ENCODE measurements at regions of chr19 and their contacts with region 1.

Region 1: DNA sequence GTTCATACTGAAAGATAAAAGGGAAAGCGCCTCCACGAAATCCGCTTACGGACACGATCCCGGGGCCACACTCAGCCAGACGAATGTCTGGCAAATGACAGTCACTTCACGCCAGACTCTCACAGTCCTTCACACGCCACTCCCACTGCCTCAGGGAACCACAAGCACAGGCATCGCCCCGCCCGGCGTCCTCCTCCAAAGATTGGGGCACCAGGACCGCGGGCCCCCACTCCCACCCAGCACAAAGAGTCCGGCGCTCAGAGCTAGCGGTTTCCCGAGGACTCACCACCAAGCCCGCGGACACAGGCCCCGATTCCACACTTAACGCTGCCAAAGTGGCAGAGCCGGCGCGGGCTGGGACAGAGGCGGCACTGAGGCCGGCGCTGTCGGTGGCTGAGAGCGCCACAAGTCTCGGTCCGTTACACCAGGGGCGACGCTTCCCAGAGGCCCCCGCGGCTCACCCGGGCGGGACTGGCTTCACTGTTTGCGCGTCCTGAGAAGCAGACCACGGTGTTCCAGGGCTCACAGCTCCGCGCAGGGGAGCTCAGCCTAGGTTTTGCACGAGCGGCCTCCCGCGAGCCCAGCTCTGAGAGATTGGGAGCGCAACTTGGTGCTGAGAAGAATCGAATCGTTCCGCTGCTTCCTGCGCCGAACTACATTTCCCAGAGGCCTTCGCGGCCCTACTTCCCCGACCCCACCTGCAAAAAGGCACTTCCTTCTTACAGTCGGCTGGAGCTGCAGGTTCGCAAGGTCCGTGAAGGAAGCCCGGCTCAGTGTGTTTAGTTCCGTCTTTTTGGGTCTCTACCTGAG is at the start of gene ZNF569:
- DNase-seq: peak; percentile 86 to 89
- ATAC-seq: peak; percentile 91 to 92
- H3K4me3 ChIP-seq: peak within 1 kb of the TSS; percentile 87 to 90 (median 88)
- H3K27ac ChIP-seq: peak within 1 kb of the TSS; percentile 84 to 92 (median 88)
- H3K4me1 ChIP-seq: peaks cover 14 to 16% of the 10 kb centered on the region in 2 donors
- H3K27me3 ChIP-seq: no peaks in the 10 kb centered on the region
- CTCF ChIP-seq: peak in 1 of 5 experiments; percentile 16
- POLR2A ChIP-seq: peak; percentile 20 to 28
- total RNA-seq, gene ZNF569: 3.4 to 9.2 (median 4.4) TPM

Region 2: GRCh38 chr19:36837906-36838783 is 628.9 kb before region 1 on chr19 and contains the start of gene ZNF790:
- in situ Hi-C with region 1: loop called in 1 of 4 experiments (anchors 10 kb)
- intact Hi-C with region 1: loop called (anchors 1 kb)
- DNase-seq: peak; percentile 74 to 85
- ATAC-seq: peak; percentile 98 to 99
- H3K4me3 ChIP-seq: peak within 1 kb of the TSS; percentile 68 to 87 (median 79)
- H3K27ac ChIP-seq: peak within 1 kb of the TSS; percentile 74 to 90 (median 86)
- H3K4me1 ChIP-seq: peaks cover 8 to 9% of the 10 kb centered on the region in 2 donors
- H3K27me3 ChIP-seq: no peaks in the 10 kb centered on the region
- CTCF ChIP-seq: no peak
- POLR2A ChIP-seq: no peak
- total RNA-seq, gene ZNF790: 2.4 to 8.1 (median 5.2) TPM

Region 3: DNA sequence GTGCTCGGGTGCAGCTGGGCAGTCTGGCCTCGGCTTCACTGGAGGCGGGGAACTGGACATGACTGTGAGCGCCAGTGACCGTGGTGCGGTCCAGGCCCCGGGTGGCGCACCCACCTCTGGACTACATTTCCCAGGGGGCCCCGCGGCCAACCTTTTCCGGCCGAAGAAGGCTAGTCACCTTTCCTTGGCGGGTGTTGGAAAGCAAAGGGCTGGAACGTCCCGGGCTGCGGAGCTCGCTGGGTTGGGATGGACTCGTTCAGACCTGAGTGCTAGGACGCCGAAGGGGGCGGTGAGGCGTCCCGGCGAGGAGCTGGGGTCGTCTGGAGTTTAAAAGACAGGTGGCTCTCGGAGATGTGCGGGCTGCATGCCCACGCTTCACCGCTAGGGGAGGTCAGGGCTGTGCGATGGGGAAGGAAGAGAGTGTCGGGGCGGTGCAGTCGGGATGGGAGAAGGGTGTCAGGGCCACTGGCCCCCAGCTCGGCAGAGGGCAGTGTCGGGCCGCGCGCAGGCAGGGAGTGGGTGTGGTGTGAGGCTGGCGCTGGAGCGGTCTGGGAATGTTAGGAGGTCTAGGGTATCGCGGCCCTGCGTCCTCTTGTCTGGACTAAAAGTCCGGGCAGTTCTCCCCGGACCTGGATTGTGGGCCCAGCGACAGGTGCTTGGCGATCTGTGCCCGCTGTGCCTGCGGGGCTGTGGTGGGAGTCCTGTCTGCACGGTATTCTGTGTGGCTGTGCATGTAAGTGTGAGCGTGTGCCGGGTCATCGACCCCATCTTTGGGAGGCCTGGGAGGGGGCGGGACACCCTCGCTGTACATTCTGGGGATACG is 493.8 kb before region 1 on chr19:
- in situ Hi-C with region 1: no loop called
- intact Hi-C with region 1: loop called (anchors 5 kb)
- DNase-seq: peak; percentile 41 to 61
- ATAC-seq: peak; percentile 85 to 92
- H3K4me3 ChIP-seq: peak overlapping the region; percentile 61 to 82 (median 70)
- H3K27ac ChIP-seq: peak overlapping the region; percentile 52 to 82 (median 70)
- H3K4me1 ChIP-seq: peaks cover 3 to 7% of the 10 kb centered on the region in 2 donors
- H3K27me3 ChIP-seq: peaks cover 0 to 5% (median 0%) of the 10 kb centered on the region in 3 donors
- CTCF ChIP-seq: peak; percentile 64 to 85 (median 71)
- POLR2A ChIP-seq: no peak

Region 4: DNA sequence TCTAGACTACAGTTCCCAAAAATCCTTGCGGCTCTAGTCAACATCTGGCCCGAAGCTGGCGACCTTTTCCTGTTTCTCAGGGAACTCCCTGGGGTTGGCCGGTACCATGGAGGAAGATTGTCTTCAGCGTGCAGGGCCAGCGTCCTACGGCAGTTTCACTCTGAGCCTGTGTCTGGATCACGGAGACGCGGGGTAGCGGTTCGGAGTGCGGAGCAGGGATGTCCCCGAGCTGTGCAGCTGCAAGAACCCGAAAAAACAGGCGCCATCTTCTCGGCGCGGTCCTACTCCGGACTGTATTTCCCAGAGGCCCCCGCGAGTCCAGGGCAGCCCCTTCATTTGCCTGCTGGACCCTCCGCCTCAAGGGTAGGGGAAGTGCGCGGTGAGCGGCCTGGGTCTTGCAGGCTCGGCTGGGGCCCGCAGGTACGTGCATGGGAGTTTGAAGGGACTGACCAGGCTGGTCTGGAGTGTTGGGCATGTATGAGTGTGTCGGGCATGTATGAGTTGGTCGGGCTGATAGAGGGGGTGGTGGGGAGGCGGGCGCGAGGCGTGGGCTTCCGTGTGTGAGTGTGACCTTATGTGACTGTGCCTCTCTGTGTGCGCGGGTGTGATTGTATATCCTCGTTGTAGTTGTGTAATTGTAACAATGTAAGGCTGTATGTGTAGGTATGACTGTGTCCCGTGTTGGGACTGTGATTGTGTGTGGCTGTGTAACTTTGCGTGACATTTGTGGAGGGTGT is 249.0 kb before region 1 on chr19 and contains the start of gene ZNF383:
- in situ Hi-C with region 1: loop called in 1 of 4 experiments (anchors 25 kb)
- intact Hi-C with region 1: loop called (anchors 2 kb)
- DNase-seq: peak; percentile 81 to 83
- ATAC-seq: peak; percentile 95 to 96
- H3K4me3 ChIP-seq: peak within 1 kb of the TSS; percentile 82 to 92 (median 88)
- H3K27ac ChIP-seq: peak within 1 kb of the TSS; percentile 89 to 93 (median 91)
- H3K4me1 ChIP-seq: peaks cover 3 to 11% of the 10 kb centered on the region in 2 donors
- H3K27me3 ChIP-seq: no peaks in the 10 kb centered on the region
- CTCF ChIP-seq: no peak
- POLR2A ChIP-seq: peak; percentile 7 to 38
- total RNA-seq, gene ZNF383: 2.3 to 8.4 (median 4.0) TPM

Region 5: GRCh38 chr19:37370880-37371661 is 95.9 kb before region 1 on chr19 and contains the start of gene ZNF527:
- in situ Hi-C with region 1: loop called in 1 of 4 experiments (anchors 10 kb)
- intact Hi-C with region 1: loop called (anchors 1 kb)
- DNase-seq: peak; percentile 95 to 97
- ATAC-seq: peak; percentile 98 to 99
- H3K4me3 ChIP-seq: peak within 1 kb of the TSS; percentile 73 to 90 (median 88)
- H3K27ac ChIP-seq: peak within 1 kb of the TSS; percentile 84 to 91 (median 88)
- H3K4me1 ChIP-seq: peaks cover 7 to 8% of the 10 kb centered on the region in 2 donors
- H3K27me3 ChIP-seq: no peaks in the 10 kb centered on the region
- CTCF ChIP-seq: no peak
- POLR2A ChIP-seq: peak; percentile 76 to 88
- total RNA-seq, gene ZNF527: 2.0 to 6.0 (median 2.8) TPM

Region 6: DNA sequence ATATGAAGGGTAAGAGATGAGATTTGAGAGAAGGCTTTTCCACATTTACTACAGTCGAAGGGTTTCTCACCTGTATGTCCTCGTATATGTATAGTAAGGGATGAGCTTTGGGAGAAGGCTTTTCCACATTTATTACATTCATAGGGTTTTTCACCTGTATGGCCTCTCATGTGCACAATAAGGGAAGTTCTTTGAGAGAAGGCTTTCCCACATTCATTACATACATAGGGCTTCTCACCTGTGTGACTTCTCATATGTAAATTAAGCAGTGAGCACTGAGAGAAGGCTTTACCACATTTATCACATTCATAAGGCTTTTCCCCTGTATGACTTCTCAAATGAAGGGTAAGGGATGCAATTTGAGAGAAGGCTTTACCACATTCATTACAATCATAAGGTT is 54.3 kb before region 1 on chr19:
- in situ Hi-C with region 1: no loop called
- intact Hi-C with region 1: no loop called
- DNase-seq: no peak
- ATAC-seq: no peak
- H3K4me3 ChIP-seq: peak overlapping the region in 1 of 4 donors; percentile 40
- H3K27ac ChIP-seq: no peak overlapping the region
- H3K4me1 ChIP-seq: no peaks in the 10 kb centered on the region
- H3K27me3 ChIP-seq: no peaks in the 10 kb centered on the region
- CTCF ChIP-seq: no peak
- POLR2A ChIP-seq: no peak

Region 7: DNA sequence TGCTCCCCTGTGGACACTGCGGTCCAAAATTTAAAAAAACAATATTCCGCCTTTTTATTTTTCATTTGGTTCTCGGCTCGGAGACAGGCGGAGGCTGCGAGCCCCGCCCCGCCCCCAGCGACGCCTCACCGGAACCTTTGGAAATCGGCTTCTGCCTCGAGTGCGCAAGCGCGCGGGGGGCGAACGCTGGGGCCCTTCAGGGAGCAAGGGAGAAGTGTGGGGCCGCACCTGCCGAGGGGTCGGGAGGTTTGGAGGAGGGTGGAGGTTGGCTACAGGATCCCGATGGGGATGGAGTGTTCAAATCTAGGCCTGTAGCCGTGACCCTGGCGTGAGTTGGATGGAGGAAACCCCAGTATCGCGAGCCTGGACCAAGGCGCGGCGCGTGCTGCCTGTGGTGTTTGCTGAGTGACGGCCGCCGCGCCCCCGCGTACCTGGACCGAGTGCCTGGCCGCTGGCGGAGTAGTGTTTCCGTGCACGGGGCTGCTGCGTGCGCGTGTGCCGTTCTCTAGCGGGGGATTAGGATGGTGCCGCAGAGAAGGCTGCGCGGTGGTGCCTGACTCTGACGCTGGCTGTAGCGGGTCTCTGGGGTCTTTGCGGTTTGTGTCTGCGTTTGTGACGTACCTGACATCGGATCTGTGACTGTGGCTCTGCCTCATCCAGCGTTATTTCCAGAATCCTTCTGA is 188.8 kb after region 1 on chr19:
- in situ Hi-C with region 1: no loop called
- intact Hi-C with region 1: loop called (anchors 5 kb)
- DNase-seq: peak; percentile 63 to 81
- ATAC-seq: peak; percentile 85 to 93
- H3K4me3 ChIP-seq: peak overlapping the region; percentile 75 to 94 (median 84)
- H3K27ac ChIP-seq: peak overlapping the region; percentile 90 to 94 (median 93)
- H3K4me1 ChIP-seq: peaks cover 21 to 22% of the 10 kb centered on the region in 2 donors
- H3K27me3 ChIP-seq: no peaks in the 10 kb centered on the region
- CTCF ChIP-seq: peak in 1 of 5 experiments; percentile 31
- POLR2A ChIP-seq: peak; percentile 29 to 32